ENCODE measurements at regions of chr10 and their contacts with region 1.

Region 1: DNA sequence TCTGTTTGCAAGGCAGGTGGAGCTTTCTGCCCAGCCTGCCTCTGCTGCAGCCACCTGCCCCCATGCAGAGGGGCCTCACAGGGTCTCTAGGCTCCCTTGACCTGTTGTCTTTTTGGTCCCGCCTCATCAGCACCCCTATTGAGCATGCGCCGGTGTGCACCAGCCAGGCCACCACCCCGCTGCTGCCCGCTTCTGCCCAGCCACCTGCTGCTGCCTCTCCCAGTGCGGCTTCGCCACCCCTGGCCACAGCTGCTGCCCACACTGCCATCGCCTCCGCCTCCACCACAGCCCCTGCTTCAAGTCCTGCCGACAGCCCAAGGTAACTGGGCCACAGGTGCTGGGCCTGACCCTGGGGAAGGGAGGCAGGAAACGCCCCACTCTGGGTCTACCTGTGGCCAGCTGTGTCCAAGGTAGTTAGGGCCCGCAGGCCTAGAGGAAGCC is 38.1 kb downstream of the LDB3 start:
- DNase-seq: peak; percentile 71
- H3K4me3 ChIP-seq: no peak overlapping the region
- H3K27ac ChIP-seq: no peak overlapping the region
- H3K4me1 ChIP-seq: peaks cover 6 to 15% (median 10%) of the 10 kb centered on the region in 6 donors
- H3K27me3 ChIP-seq: peaks cover 0 to 52% (median 7%) of the 10 kb centered on the region in 7 donors
- CTCF ChIP-seq: no peak
- POLR2A ChIP-seq: no peak

Region 2: DNA sequence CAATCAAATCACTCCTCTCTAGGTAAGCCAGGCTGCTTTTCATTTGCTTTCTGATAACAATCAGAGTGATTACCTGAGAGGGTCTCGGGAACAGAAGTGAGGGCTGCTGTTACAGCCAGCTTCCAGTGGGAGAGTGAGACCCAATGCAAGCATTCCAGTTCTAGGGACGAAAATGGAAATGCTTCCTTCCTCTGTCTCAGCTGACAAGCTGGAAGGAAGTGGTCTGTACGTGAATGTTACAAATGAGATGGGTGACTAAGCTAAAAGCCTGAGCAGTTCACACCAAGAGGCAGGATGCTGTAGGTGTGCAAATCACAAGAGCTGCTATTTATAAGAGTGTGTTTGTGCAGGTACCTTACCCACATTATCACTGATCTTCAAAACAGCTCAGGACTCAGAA is 1112.2 kb before region 1 on chr10:
- intact Hi-C with region 1: no loop called
- DNase-seq: no peak
- H3K4me3 ChIP-seq: no peak overlapping the region
- H3K27ac ChIP-seq: no peak overlapping the region
- H3K4me1 ChIP-seq: peaks cover 0 to 8% (median 2%) of the 10 kb centered on the region in 6 donors
- H3K27me3 ChIP-seq: no peaks in the 10 kb centered on the region
- CTCF ChIP-seq: no peak
- POLR2A ChIP-seq: no peak

Region 3: DNA sequence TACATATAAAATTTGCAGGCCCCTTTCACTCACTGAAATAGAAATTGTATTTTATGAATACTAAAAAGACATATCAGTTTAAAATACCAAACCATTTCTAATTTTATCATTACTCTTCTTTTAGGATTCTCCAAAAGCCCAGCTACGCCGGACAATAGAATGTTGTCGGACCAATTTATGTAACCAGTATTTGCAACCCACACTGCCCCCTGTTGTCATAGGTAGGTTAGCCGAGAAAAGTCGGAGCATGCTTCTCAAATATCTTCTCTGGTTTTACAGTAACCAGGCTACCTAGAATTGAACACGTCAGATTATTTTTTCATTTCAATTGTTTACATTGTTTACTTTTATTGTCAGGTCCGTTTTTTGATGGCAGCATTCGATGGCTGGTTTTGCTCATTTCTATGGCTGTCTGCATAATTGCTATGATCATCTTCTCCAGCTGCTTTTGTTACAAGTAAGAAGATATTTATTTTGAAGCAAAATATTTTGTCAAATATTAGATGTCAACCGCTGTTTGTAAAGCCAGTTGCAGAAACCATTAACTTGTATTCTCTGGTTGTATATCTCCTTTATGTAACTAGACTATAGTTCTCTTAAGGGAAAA is 193.4 kb after region 1 on chr10:
- intact Hi-C with region 1: loop called (anchors 10 kb)
- DNase-seq: no peak
- H3K4me3 ChIP-seq: no peak overlapping the region
- H3K27ac ChIP-seq: no peak overlapping the region
- H3K4me1 ChIP-seq: no peaks in the 10 kb centered on the region
- H3K27me3 ChIP-seq: peaks cover 0 to 20% (median 0%) of the 10 kb centered on the region in 7 donors
- CTCF ChIP-seq: peak in 10 of 11 experiments; percentile 32 to 76 (median 68)
- POLR2A ChIP-seq: no peak